GM13977 (cell line): ENCODE measurements at regions of chr7 and their contacts with region 1.

Region 1: DNA sequence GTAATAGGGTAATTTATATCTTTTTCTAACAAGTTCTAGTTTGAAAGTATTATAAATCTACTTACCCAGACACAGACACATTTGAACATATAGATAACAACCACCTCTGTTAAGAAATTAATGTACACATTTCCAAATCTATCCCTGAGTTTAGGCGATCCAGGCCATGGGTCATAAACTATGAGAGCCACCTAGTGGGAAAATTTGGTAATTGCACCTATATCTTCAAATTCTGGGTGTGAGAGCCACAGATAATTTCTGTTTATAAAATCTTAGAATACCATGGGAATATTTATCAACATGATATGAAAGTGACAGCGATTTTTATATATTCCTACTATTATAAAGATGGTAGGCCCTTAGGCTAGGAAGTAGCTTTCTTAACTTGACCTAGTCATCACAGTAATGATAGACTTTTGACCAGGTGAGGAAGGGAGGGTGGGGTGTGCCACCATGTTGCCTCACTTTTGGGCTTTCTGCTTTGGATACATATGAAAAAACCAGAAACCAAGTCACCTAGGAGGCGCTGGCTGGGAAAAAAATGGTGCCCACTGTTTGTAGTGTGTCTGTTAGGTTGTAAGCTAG is 8.0 kb upstream of the EPHA1 start:
- DNase-seq: peak; percentile 80
- CTCF ChIP-seq: peak; percentile 63

Region 2: DNA sequence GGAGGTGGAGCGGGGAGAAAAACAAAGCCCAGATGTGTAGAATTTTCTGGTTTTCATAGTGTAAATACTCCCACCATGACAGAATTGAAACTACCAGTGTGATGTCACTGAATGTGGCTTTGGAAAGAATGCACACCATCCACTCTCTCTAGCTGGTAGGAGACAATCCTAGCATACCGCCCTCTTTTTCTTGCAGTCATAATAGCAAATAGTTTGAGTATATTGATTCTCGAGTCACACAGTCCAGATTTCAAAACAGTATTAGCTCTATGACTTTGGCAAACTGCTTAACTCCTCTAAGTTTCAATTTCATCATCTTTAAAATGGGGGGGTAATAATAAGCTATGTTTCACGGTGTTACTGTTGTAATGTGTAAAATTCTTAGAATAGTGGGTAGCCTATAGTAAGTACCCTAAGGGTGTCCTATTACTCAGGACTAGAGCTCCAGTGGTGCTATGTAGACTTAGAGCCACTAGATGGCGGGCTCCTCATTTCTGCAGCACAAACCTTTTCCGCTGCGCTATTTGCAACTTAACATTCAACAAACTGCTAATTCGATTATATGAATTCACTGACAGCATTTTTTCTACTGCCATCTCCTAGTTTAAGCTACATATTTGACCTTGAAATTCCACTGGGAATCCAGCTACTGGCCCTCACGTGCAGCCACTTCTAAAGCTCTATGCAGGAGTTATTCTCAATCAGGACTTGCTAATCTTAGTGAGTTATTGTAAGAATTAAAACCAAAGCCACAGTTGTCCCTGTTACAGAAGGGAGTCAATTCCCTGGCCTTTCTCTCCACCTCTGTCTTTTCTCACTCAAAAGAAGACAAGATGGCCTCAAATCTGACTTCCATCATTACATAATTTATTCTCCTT is 176.1 kb before region 1 on chr7:
- in situ Hi-C with region 1: loop called (anchors 25 kb)
- DNase-seq: peak; percentile 60
- CTCF ChIP-seq: peak; percentile 86